K562 (cell line): ENCODE measurements at regions of chr2 and their contacts with region 1.

Region 1: DNA sequence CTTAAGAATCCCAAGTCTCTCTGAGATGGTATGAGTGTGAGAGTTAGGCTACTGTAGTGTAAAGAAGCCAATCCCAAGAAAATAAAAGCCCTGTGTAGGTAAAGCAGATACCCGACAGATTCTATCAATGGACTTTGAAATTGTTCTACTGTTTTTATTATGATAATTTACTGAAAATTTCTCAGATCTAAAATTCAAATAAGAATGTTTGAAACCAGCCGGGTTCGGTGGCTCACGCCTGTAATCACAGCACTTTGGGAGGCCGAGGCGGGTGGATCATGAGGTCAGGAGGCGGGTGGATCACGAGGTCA is 208.3 kb upstream of the SPRED2 start:
- DNase-seq: no peak
- ATAC-seq: no peak
- H3K4me3 ChIP-seq: no peak overlapping the region
- H3K27ac ChIP-seq: no peak overlapping the region
- H3K4me1 ChIP-seq: no peaks in the 10 kb centered on the region
- H3K27me3 ChIP-seq: peaks cover 9 to 10% of the 10 kb centered on the region in 2 experiments; a peak in 4 of 5 replicates
- CTCF ChIP-seq: no peak
- EP300 ChIP-seq: no peak
- POLR2A ChIP-seq: no peak
- RAD21 ChIP-seq: no peak

Region 2: DNA sequence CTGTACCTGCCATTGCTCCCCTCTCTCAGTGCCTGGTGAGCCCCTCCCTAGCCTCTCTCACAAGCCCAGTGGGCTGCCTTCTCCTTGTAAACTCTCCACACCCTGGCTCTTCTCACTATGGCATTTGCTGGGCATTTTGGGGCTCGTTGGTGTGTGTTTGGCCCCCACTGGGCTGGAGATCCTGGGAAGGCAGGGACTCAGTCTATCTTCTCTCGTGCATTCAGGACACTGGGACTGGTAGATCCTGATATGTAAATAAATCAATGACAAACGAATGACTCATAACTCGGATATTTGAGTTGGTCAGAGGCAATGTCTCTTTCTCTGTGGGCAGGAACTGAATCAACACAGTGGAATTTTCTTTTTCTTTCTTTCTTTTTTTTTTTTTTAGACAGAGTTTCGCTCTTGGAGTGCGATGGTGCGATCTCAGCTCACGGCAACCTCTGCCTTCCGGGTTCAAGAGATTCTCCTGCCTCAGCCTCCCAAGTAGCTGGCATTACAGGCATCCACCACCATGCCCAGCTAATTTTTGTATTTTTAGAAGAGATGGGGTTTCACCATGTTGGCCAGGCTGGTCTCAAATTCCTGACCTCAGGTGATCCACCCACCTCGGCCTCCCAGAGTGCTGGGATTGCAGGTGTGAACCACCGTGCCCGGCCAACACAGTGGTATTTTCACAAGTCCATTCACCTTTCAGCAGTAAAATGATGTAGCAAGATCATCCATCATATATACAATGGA is 63.7 kb before region 1 on chr2:
- CTCF ChIA-PET with region 1: no interaction called
- POLR2A ChIA-PET with region 1: no interaction called
- in situ Hi-C with region 1: no loop called
- intact Hi-C with region 1: no loop called
- DNase-seq: peak in 1 of 4 experiments; percentile 52
- ATAC-seq: peak; percentile 53; the same call in 2 of the 3 replicates
- H3K4me3 ChIP-seq: no peak overlapping the region
- H3K27ac ChIP-seq: no peak overlapping the region
- H3K4me1 ChIP-seq: peaks cover 2 to 4% of the 10 kb centered on the region in 2 experiments; a peak in 3 of 5 replicates
- H3K27me3 ChIP-seq: peaks cover 3 to 12% of the 10 kb centered on the region in 2 experiments; a peak in 4 of 5 replicates
- CTCF ChIP-seq: no peak
- EP300 ChIP-seq: no peak
- POLR2A ChIP-seq: no peak
- RAD21 ChIP-seq: no peak

Region 3: GRCh38 chr2:65710779-65711295 is 70.1 kb after region 1 on chr2:
- CTCF ChIA-PET with region 1: no interaction called
- POLR2A ChIA-PET with region 1: no interaction called
- in situ Hi-C with region 1: no loop called
- intact Hi-C with region 1: loop called (anchors 2 kb)
- DNase-seq: peak in 2 of 4 experiments; percentile 21 to 28
- ATAC-seq: peak; percentile 69
- H3K4me3 ChIP-seq: no peak overlapping the region
- H3K27ac ChIP-seq: no peak overlapping the region
- H3K4me1 ChIP-seq: no peaks in the 10 kb centered on the region
- H3K27me3 ChIP-seq: peaks cover 0 to 9% of the 10 kb centered on the region in 2 experiments; a peak in 1 of 5 replicates
- CTCF ChIP-seq: peak; percentile 40 to 55 (median 43); a peak in 4 of 6 replicates
- EP300 ChIP-seq: no peak
- POLR2A ChIP-seq: no peak
- RAD21 ChIP-seq: peak; percentile 48 to 57

Region 4: GRCh38 chr2:66962625-66963207 is 1322.0 kb after region 1 on chr2:
- CTCF ChIA-PET with region 1: no interaction called
- POLR2A ChIA-PET with region 1: no interaction called
- in situ Hi-C with region 1: no loop called
- intact Hi-C with region 1: no loop called
- DNase-seq: no peak
- ATAC-seq: no peak
- H3K4me3 ChIP-seq: no peak overlapping the region
- H3K27ac ChIP-seq: no peak overlapping the region
- H3K4me1 ChIP-seq: no peaks in the 10 kb centered on the region
- H3K27me3 ChIP-seq: no peaks in the 10 kb centered on the region
- CTCF ChIP-seq: no peak
- EP300 ChIP-seq: no peak
- POLR2A ChIP-seq: no peak
- RAD21 ChIP-seq: no peak